ENCODE measurements at regions of chr16 and their contacts with region 1.

Region 1: GRCh38 chr16:66275775-66276428 is 90.6 kb upstream of the CDH5 start:
- DNase-seq: peak; percentile 34
- ATAC-seq: no peak
- H3K4me3 Mint-ChIP-seq: no peak overlapping the region
- H3K27ac Mint-ChIP-seq: no peak overlapping the region
- H3K4me1 Mint-ChIP-seq: peaks cover 2% of the 10 kb centered on the region
- H3K27me3 Mint-ChIP-seq: peaks cover 18% of the 10 kb centered on the region

Region 2: DNA sequence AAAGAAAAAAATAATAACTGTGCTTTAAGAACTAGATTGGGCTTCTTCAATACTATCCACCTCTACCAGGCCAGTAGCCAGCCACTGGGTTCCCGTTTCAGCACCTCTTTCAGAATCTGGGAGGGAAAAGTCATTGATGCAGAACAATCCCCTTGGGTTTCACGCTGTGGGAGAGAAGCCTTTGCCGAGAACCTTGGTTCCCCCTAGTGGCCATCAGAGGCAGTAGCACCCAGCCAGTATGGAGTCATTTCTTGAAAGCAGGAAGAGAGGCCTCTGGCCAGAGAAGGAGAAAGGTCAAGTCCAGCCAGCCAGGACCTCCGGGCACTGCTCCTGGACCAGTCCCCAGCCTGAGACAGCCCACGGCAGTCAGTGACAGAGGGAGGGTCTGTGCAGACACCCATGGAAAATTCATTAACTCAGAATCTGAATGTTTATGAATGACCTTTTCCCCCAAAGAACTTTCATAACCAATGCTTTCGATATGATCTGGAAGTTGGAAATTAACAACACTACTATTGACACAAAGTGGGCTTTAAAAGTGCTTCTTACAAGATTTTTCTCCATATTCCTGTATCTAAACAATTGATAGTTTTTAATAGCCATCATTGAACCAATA is 39.4 kb after region 1 on chr16:
- CTCF ChIA-PET with region 1: interaction called, 24 read pairs
- POLR2A ChIA-PET with region 1: no interaction called
- DNase-seq: peak; percentile 70
- ATAC-seq: peak; percentile 94
- H3K4me3 Mint-ChIP-seq: no peak overlapping the region
- H3K27ac Mint-ChIP-seq: no peak overlapping the region
- H3K4me1 Mint-ChIP-seq: no peaks in the 10 kb centered on the region
- H3K27me3 Mint-ChIP-seq: peaks cover 5% of the 10 kb centered on the region

Measured in activated CD8-positive, alpha-beta T cell treated with anti-CD3 and anti-CD28 coated beads, Interleukin-2, amount 10 ng/mL, durations not matched to agents 7 days and 5 days (primary cell).